ENCODE measurements at regions of chr9 and their contacts with region 1.

Region 1: DNA sequence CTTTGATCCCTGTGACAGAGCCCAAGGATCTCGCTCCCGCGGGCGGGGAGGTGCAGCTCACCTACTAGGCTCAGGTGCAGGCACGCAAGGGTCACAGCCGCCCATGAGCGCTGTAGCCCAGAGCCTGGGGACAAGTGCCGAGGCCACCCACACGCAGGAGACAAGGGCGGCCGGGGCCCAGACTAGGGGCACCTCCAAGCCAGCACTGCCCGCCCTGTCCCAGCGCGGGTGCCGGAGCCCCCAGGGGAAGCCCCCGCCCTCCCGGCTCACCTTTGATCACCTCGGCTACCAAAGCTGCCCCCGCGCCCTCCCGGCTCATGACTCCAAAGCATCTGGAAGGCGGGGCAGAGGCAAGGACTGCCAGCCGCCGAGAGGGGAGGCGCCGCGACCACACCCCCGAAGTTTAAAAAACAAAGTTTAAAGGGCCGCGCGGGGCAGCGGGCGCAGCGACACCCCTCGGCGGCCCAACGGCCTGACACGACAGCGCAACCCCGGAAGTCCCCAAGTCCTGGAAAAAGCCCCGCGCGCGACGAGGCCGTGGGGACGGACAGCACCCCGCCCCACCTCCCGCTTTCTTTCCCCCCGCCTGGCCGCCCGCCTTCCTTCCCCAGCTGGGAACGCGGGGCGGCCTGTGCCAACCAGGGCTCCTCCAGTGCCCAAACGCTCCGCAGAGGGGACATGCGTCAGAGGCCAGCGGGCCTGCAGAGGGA is 53.0 kb downstream of the CDC14B start:
- DNase-seq: peak; percentile 11
- H3K4me3 ChIP-seq: peak overlapping the region; percentile 59 to 72 (median 60)
- H3K27ac ChIP-seq: no peak overlapping the region
- H3K4me1 ChIP-seq: peaks cover 5% of the 10 kb centered on the region
- H3K27me3 ChIP-seq: peaks cover 8 to 38% of the 10 kb centered on the region in 2 experiments
- CTCF ChIP-seq: peak; percentile 27 to 37
- POLR2A ChIP-seq: no peak

Region 2: GRCh38 chr9:96317335-96317980 is 249.2 kb before region 1 on chr9:
- CTCF ChIA-PET with region 1: no interaction called
- POLR2A ChIA-PET with region 1: no interaction called
- dilution Hi-C with region 1: no loop called
- intact Hi-C with region 1: loop called (anchors 5 kb)
- DNase-seq: peak; percentile 57
- H3K4me3 ChIP-seq: no peak overlapping the region
- H3K27ac ChIP-seq: no peak overlapping the region
- H3K4me1 ChIP-seq: no peaks in the 10 kb centered on the region
- H3K27me3 ChIP-seq: no peaks in the 10 kb centered on the region
- CTCF ChIP-seq: peak; percentile 69 to 85
- POLR2A ChIP-seq: no peak

Region 3: DNA sequence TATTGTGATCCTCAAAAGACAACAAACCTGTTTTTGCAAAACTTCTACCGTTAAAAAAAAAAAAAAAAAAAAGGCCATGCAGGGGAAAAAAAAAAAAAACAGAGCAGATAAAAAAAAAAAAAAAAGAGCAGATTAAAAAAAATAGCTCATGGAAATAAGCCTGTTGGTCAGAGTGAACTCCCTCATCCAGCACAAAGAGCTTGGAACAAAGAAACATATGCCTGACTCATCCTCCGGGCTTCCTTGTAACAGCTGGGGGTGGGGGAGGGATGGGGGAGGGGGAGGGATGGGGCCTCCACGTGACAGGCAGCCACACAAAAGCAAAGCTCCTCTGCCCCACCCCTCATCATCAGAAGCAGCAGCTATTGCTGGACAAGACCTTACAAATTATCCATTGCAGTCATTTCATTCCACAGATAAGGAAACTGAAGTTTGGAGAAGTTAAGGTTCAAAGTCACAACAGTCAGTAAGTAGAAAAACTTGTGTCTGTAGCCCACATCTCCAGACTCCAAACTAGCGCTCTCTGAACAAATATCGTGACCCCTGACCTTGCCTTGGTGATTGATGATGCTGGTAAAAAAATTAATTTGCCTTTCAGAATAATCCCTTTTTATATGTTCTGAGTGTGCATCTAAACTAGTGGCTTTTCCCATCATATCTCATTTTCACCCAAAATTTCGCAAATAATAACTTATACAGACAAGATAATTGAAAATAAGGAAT is 222.0 kb before region 1 on chr9:
- CTCF ChIA-PET with region 1: no interaction called
- POLR2A ChIA-PET with region 1: no interaction called
- dilution Hi-C with region 1: no loop called
- intact Hi-C with region 1: loop called (anchors 5 kb)
- DNase-seq: peak; percentile 83
- H3K4me3 ChIP-seq: no peak overlapping the region
- H3K27ac ChIP-seq: peak overlapping the region; percentile 51
- H3K4me1 ChIP-seq: peaks cover 18% of the 10 kb centered on the region
- H3K27me3 ChIP-seq: no peaks in the 10 kb centered on the region
- CTCF ChIP-seq: no peak
- POLR2A ChIP-seq: no peak

Region 4: GRCh38 chr9:97076238-97076637 is 509.6 kb after region 1 on chr9:
- CTCF ChIA-PET with region 1: no interaction called
- POLR2A ChIA-PET with region 1: no interaction called
- dilution Hi-C with region 1: no loop called
- intact Hi-C with region 1: no loop called
- DNase-seq: no peak
- H3K4me3 ChIP-seq: no peak overlapping the region
- H3K27ac ChIP-seq: no peak overlapping the region
- H3K4me1 ChIP-seq: peaks cover 2% of the 10 kb centered on the region
- H3K27me3 ChIP-seq: peaks cover 0 to 2% of the 10 kb centered on the region in 2 experiments
- CTCF ChIP-seq: no peak
- POLR2A ChIP-seq: no peak